ENCODE measurements at regions of chr3 and their contacts with region 1.

Region 1: DNA sequence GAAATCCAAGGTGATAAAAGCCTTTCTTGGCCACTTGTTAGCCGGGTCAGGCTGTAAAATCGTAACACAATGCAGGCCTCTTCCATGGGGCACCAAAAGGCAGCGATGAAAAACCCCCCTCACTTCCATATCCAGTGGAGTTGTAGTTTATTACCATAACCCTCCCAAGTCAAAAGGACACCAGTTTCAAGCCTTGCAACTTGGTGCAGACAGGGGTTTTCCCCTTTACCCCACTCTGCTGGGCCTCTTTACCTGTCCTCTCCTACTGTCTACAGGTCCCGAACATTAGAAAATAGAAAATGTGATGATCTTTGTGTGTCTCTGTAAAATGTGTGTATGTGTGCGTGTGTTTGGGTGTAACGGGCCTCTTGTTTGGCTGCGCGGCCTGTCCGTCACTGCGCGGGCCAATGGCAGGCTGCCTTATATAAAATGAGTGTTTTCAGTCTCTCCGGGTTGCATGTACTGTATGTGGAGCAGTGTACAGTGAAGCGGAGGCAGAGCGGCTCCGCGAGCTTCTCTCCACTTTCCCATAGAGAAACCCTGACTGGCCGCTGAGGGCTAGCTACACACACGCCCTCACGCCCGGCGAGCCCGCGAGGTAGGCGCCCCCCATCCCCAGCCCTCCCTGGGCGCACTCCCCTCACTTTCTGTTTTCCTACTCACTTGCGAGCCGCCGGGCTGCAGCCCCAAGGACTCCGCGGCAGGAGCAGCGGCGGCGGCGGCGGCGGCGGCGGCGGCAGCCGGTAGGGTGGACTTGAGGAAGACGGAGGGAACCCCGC is at the start of gene BBX:
- DNase-seq: peak; percentile 94 to 98
- H3K4me3 ChIP-seq: peak within 1 kb of the TSS; percentile 68 to 97
- H3K27ac ChIP-seq: peak within 1 kb of the TSS; percentile 95 to 96
- H3K4me1 ChIP-seq: peaks cover 0 to 21% (median 8%) of the 10 kb centered on the region in 4 donors
- H3K27me3 ChIP-seq: no peaks in the 10 kb centered on the region
- CTCF ChIP-seq: no peak

Region 2: GRCh38 chr3:107271787-107272387 is 250.8 kb before region 1 on chr3:
- intact Hi-C with region 1: loop called (anchors 10 kb)
- DNase-seq: no peak
- H3K4me3 ChIP-seq: no peak overlapping the region
- H3K27ac ChIP-seq: no peak overlapping the region
- H3K4me1 ChIP-seq: no peaks in the 10 kb centered on the region
- H3K27me3 ChIP-seq: no peaks in the 10 kb centered on the region
- CTCF ChIP-seq: peak; percentile 57 to 63

Region 3: GRCh38 chr3:107429320-107430181 is 93.1 kb before region 1 on chr3:
- intact Hi-C with region 1: loop called (anchors 1 kb)
- DNase-seq: peak; percentile 69 to 89
- H3K4me3 ChIP-seq: peak overlapping the region; percentile 66 to 72
- H3K27ac ChIP-seq: peak overlapping the region; percentile 95
- H3K4me1 ChIP-seq: peaks cover 0 to 10% (median 2%) of the 10 kb centered on the region in 4 donors
- H3K27me3 ChIP-seq: no peaks in the 10 kb centered on the region
- CTCF ChIP-seq: peak; percentile 80 to 92

Region 4: DNA sequence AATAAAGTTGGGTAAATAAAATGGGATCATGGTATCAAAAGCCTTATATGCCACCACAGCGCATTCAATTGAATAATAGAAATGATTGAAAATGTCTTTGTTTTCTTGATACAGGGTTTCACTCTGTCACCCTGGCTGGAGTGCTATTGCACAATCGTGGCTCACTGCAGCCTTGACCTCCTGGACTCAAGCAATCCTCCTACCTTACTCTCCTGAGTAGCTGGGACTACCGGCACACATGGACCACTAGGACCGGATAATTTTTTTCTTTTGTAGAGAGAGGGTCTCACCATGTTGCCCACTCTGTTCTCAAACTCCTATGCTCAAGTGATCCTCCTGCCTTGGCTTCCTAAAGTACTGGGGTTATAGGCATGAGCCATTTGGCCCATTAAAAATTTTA is 33.8 kb before region 1 on chr3:
- intact Hi-C with region 1: no loop called
- DNase-seq: no peak
- H3K4me3 ChIP-seq: no peak overlapping the region
- H3K27ac ChIP-seq: no peak overlapping the region
- H3K4me1 ChIP-seq: no peaks in the 10 kb centered on the region
- H3K27me3 ChIP-seq: no peaks in the 10 kb centered on the region
- CTCF ChIP-seq: no peak